Activated CD8-positive, alpha-beta T cell treated with anti-CD3 and anti-CD28 coated beads, Interleukin-2, amount 10 ng/mL, durations not matched to agents 7 days and 5 days (primary cell): ENCODE measurements at regions of chr15 and their contacts with region 1.

Region 1: GRCh38 chr15:88638626-88639372 is at the start of gene ISG20:
- DNase-seq: peak; percentile 98
- ATAC-seq: peak; percentile 88
- H3K4me3 Mint-ChIP-seq: peak within 1 kb of the TSS; percentile 84
- H3K27ac Mint-ChIP-seq: peak within 1 kb of the TSS; percentile 95
- H3K4me1 Mint-ChIP-seq: peaks cover 78% of the 10 kb centered on the region
- H3K27me3 Mint-ChIP-seq: no peaks in the 10 kb centered on the region
- total RNA-seq, gene ISG20: 141 to 151 TPM

Region 2: DNA sequence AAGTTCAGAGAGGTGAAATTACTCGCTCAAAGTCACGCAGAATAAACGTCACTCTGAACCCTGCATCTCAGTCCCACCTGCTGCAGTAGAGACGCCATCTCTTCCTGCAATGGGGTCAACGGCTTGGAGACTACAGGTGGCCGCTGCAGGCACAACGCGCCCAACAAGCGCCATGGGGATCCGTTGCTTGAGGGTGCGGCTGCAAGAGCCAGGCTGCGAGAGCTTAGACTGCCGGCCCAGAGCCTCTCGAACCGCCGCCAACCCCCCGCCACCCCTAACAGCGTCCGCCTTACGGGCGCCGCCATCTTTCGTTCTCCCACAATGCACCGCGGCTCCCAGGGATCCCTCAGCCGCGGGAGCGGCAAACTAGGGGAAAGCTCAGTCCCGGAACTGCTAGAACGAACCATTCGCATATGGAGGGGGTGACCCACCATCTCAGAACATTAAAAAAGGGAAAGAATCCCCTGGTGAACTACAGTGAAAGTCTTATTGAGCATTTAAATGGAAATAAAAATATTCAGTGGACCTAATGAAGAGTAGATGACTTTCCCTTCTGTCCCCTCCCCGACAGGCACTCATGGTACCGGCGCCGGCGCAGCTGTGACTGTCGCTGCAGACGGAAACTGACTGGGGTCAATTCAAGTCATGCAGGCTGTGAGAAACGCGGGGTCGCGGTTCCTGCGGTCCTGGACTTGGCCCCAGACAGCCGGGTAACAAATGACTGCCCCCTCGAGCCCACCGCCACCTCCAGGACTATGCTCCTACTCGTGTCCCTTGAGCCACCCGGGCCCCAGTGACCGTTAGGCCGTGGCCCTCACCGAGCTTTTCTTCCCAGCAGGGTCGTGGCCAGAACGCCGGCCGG is 171.5 kb before region 1 on chr15 and contains the starts of genes MRPL46 and MRPS11:
- CTCF ChIA-PET with region 1: interaction called, 5 read pairs
- POLR2A ChIA-PET with region 1: interaction called, 13 read pairs
- DNase-seq: peak; percentile 93
- ATAC-seq: peak; percentile 93
- H3K4me3 Mint-ChIP-seq: peak within 1 kb of the TSS; percentile 95
- H3K27ac Mint-ChIP-seq: peak within 1 kb of the TSS; percentile 99
- H3K4me1 Mint-ChIP-seq: peaks cover 29% of the 10 kb centered on the region
- H3K27me3 Mint-ChIP-seq: no peaks in the 10 kb centered on the region
- total RNA-seq, gene MRPL46: 28.8 to 31.3 TPM
- total RNA-seq, gene MRPS11: 63.8 to 69.8 TPM

Region 3: DNA sequence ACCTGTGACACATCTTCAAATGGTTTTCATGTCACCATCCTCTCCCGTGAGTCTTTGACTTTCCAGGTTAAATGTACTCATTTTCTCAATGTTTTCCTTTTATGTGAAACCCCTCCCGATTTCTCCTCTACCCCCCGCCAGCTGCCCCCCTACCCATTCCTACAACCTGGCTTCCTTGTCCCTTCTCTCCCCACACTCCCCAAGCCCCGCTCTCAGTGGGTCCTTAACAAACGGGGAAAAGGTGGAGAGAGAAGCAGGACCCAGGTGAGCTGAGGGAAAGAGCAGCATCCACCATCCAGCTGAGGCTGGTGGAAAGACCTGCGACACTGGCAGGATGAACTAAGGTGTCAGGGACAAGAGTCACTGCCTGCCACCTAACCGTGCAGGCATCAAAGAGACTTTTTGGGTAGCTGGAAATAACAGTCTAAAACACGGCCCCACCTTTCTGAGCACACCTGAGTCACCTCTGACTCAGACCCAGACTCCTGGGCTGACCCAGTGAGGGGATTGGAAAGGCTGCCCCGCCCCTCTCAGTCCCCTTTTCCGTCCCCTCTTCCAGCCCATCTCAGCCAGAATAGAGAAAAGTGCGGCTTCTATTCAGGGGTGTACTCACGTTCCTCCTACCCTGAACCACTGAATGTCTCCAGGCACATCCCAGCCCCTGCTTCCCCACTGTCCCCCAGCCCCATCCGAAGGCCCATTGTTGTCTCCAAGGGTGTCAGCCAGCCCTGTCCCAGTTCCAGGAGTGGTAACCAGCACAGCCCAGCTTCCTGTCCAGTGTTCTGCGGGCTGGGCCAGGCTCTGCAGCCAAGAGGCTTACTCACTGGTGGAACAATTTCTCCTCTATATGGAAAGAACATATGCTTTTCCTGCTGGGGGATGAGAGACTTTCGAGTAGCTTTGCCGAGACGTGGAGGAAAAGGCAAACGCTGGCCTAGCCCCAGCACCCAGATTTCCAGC is 20.5 kb after region 1 on chr15:
- CTCF ChIA-PET with region 1: interaction called, 10 read pairs
- POLR2A ChIA-PET with region 1: interaction called, 7 read pairs
- DNase-seq: no peak
- ATAC-seq: no peak
- H3K4me3 Mint-ChIP-seq: no peak overlapping the region
- H3K27ac Mint-ChIP-seq: no peak overlapping the region
- H3K4me1 Mint-ChIP-seq: peaks cover 15% of the 10 kb centered on the region
- H3K27me3 Mint-ChIP-seq: no peaks in the 10 kb centered on the region

Region 4: DNA sequence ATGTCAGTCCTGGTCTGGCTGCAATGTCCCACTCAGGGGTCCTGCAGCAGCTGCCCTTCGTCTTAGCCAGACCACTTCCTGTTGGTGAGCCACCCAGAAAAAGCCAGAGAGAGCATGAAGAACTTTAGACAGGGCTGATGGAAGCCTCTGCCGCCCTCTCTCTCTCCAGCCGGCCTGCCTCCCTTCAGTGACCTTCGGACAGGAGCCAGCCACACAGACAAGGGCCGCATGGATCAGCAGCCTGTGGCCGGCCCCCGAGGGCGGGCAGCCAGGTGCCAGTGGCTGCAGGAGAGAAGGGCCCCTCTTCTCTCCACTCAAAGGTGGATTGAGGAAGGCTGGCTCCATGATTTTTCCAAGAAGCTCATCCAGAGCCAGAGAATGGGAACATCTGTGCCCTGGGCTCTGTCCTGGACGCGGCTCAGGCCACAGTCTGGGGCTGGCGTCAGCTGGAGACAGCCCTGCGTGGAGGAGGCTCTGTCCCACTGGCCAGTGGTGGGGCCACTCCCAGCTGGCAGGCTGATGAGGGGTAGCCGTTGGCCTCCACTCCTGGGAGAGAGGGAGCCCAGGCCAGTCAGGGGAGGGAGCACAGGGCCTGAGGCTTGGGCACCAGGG is 42.9 kb after region 1 on chr15:
- CTCF ChIA-PET with region 1: no interaction called
- POLR2A ChIA-PET with region 1: no interaction called
- DNase-seq: no peak
- ATAC-seq: no peak
- H3K4me3 Mint-ChIP-seq: no peak overlapping the region
- H3K27ac Mint-ChIP-seq: no peak overlapping the region
- H3K4me1 Mint-ChIP-seq: no peaks in the 10 kb centered on the region
- H3K27me3 Mint-ChIP-seq: peaks cover 7% of the 10 kb centered on the region